ENCODE measurements at regions of chr2 and their contacts with region 1.

Region 1: DNA sequence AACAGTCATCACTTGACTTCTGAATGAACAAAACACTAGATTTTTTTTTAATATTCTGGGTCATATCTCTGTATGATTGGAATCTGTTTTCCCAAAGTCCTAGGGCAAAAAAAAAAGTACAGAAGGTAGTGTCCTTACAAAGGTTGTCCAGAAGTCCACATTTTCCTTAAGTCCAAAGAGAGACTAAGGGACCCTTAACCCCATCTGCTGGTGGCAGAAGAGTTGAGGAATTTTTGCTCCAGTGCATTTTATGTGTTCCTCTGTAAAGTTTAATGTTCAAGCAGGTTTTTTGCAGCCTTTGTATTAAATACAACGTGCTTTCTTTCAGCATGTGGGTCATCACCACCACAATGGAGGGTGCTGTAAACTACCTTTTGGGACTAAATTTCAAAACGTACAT is 215.9 kb downstream of the SP3 start:
- ATAC-seq: peak in 1 of 8 experiments; percentile 20
- H3K4me3 ChIP-seq: no peak overlapping the region
- H3K27ac ChIP-seq: no peak overlapping the region
- H3K4me1 ChIP-seq: peaks cover 12 to 27% of the 10 kb centered on the region in 2 donors

Region 2: DNA sequence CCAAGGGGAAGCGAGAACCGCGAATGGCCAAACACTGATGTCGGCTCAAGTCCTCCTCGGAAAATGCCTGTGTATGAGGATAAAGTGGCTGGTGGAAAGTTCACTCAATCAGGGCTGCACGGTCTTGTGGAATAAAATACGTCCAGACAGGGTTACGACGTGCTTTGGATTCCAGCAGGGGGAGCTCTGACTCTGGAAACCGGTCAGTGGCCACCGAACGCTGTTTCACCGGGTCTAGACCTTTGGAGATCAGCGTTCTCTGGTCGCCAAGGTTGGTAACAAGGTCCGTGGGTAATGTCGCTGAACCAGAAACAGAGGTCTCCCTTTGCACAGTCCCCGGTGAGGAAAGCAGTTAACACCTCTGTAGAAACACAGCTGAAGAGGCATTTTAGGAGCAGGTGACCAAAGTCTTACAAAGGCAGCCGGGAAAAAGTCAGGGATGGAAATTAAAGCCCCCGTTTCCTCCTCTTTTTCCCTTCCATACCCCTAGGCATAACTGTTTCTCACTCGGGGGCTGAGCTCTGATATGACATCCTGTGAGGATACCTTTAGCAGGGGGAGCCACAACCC is 346.8 kb before region 1 on chr2:
- in situ Hi-C with region 1: loop called in 2 of 9 experiments (anchors 25 kb)
- ATAC-seq: peak; percentile 94 to 100 (median 99)
- H3K4me3 ChIP-seq: peak overlapping the region in 2 of 5 donors; percentile 3 to 13
- H3K27ac ChIP-seq: no peak overlapping the region
- H3K4me1 ChIP-seq: peaks cover 12 to 31% of the 10 kb centered on the region in 2 donors

Region 3: GRCh38 chr2:173590271-173590861 is 158.9 kb before region 1 on chr2:
- in situ Hi-C with region 1: loop called in 1 of 9 experiments (anchors 25 kb)
- ATAC-seq: peak in 4 of 8 experiments; percentile 35 to 98 (median 92)
- H3K4me3 ChIP-seq: no peak overlapping the region
- H3K27ac ChIP-seq: no peak overlapping the region
- H3K4me1 ChIP-seq: peaks cover 0 to 7% of the 10 kb centered on the region in 2 donors

Region 4: GRCh38 chr2:173667417-173667816 is 81.9 kb before region 1 on chr2:
- in situ Hi-C with region 1: no loop called
- ATAC-seq: peak in 7 of 8 experiments; percentile 27 to 85 (median 52)
- H3K4me3 ChIP-seq: no peak overlapping the region
- H3K27ac ChIP-seq: no peak overlapping the region
- H3K4me1 ChIP-seq: peaks cover 23 to 37% of the 10 kb centered on the region in 2 donors

Region 5: DNA sequence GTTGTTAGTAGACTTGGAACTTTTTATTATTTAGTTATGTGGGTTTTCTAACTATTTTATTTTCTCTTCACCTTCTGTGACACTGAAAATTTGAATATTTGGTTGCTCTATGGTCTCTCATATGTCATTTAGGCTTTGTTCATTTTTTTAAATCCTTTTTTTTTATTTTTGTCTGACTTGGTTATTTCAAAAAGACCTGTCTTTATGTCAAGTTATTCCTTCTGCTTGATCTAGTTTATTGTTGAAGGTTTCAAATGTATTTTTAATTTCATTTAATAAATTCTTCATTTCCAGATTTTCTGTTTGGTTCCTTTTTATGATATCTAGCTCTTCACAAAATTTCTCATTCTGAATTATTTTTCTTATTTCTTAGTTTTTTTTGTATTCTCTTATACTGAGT is 1592.8 kb after region 1 on chr2:
- in situ Hi-C with region 1: no loop called
- ATAC-seq: no peak
- H3K4me3 ChIP-seq: no peak overlapping the region
- H3K27ac ChIP-seq: no peak overlapping the region
- H3K4me1 ChIP-seq: no peaks in the 10 kb centered on the region

Measured in motor neuron (in vitro differentiated cells).